ENCODE measurements at regions of chr17 and their contacts with region 1.

Region 1: DNA sequence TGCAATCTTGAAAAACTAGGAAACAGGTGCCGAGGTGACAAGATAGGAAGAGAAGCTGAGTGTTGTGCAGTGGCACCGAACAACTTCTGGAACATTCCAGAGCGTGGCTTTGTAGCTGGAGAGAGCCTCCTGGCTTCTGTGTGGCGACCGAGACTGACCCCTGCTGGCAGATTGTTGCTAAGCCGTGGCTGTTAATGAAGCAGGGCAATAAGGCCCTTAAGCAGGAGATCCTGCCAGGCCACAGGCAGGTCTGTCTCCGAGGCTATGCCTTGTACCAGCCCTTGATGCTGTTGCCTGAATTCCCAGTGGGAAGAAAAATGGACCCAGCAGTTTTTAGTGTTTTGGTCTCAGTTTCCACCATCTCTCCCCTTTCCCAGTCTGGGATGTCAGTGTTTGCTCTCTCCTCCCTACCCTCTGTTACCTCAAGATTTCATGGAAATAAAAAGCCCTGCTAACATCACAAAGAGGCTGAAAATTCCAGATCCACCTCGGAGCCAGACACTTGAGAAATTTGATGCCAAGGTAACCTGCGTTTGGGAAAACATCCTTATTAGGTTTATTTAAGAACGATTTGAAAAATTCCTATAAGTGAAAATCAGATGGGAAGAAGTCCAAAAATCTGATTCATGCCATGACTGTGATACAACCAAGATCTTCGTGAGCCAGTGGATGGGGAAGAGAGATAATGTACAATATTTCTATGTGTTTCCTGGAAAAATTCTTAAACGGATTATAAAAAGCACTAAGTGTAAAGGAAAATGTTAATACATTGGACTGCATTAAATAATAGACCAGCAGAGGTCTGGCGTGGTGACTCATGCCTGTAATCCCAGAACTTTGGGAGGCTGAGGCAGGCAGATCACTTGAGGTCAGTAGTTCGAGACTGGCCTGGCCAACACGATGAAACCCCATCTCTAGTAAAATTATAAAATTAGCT is 265.1 kb downstream of the PRKCA start:
- DNase-seq: peak; percentile 97
- H3K4me3 ChIP-seq: no peak overlapping the region
- H3K27ac ChIP-seq: peak overlapping the region; percentile 90
- H3K4me1 ChIP-seq: peaks cover 16% of the 10 kb centered on the region
- H3K27me3 ChIP-seq: no peaks in the 10 kb centered on the region
- CTCF ChIP-seq: peak; percentile 90 to 93
- POLR2A ChIP-seq: no peak

Region 2: DNA sequence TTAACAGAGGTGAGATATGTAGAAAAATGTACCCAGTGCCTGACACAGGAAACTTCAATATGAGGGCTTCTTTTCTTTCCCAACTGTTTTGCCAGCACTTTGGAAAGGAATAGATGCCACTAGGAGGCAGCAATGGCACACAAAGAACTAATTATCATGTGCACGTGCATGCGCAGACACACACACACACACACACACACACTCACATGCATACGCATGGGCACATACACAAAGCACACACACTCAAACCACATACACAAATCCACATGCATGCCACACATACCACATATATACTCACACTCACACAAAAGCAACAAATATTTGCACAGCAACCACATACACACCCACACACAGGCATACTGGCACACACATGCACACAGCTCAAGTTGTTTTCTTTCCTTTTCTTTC is 366.8 kb before region 1 on chr17:
- CTCF ChIA-PET with region 1: interaction called, 18 read pairs
- POLR2A ChIA-PET with region 1: no interaction called
- dilution Hi-C with region 1: no loop called
- intact Hi-C with region 1: loop called (anchors 1 kb)
- DNase-seq: peak; percentile 79
- H3K4me3 ChIP-seq: no peak overlapping the region
- H3K27ac ChIP-seq: no peak overlapping the region
- H3K4me1 ChIP-seq: no peaks in the 10 kb centered on the region
- H3K27me3 ChIP-seq: no peaks in the 10 kb centered on the region
- CTCF ChIP-seq: peak; percentile 67 to 70
- POLR2A ChIP-seq: no peak

Region 3: DNA sequence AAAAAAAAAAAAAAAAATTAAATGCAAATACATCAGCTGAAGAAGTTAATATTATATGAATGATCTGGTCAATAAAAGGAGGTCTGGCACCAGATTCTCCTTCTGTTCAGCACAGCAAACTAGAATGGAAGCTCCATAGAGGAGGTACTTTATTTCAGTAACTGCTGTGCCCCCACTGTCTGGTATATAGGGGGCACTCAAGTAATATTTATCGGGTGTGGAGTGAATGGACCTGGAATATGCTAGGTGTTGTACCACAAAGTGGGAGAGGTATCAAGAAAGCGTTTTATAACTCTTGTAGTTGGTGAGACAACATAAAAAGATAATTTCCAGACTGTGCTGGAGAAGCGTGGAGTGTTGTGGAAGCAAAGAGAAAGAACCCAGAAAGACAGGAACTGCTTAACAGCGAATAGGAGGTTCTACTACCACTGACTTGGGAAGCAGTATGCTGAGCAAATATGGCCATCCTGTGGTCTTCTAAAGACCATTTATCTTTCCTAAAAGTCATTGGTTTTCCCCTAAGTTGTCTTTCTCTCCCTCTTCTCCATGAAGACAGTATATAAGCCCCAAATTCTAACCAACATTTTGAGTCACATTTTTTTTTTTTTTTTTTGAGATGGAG is 277.3 kb before region 1 on chr17:
- CTCF ChIA-PET with region 1: interaction called, 6 read pairs
- POLR2A ChIA-PET with region 1: no interaction called
- dilution Hi-C with region 1: no loop called
- intact Hi-C with region 1: loop called (anchors 1 kb)
- DNase-seq: peak; percentile 15
- H3K4me3 ChIP-seq: no peak overlapping the region
- H3K27ac ChIP-seq: no peak overlapping the region
- H3K4me1 ChIP-seq: no peaks in the 10 kb centered on the region
- H3K27me3 ChIP-seq: no peaks in the 10 kb centered on the region
- CTCF ChIP-seq: no peak
- POLR2A ChIP-seq: no peak

Region 4: GRCh38 chr17:66331038-66331816 is 236.3 kb before region 1 on chr17:
- CTCF ChIA-PET with region 1: no interaction called
- POLR2A ChIA-PET with region 1: no interaction called
- dilution Hi-C with region 1: no loop called
- intact Hi-C with region 1: no loop called
- DNase-seq: no peak
- H3K4me3 ChIP-seq: no peak overlapping the region
- H3K27ac ChIP-seq: no peak overlapping the region
- H3K4me1 ChIP-seq: no peaks in the 10 kb centered on the region
- H3K27me3 ChIP-seq: no peaks in the 10 kb centered on the region
- CTCF ChIP-seq: no peak
- POLR2A ChIP-seq: no peak

Region 5: DNA sequence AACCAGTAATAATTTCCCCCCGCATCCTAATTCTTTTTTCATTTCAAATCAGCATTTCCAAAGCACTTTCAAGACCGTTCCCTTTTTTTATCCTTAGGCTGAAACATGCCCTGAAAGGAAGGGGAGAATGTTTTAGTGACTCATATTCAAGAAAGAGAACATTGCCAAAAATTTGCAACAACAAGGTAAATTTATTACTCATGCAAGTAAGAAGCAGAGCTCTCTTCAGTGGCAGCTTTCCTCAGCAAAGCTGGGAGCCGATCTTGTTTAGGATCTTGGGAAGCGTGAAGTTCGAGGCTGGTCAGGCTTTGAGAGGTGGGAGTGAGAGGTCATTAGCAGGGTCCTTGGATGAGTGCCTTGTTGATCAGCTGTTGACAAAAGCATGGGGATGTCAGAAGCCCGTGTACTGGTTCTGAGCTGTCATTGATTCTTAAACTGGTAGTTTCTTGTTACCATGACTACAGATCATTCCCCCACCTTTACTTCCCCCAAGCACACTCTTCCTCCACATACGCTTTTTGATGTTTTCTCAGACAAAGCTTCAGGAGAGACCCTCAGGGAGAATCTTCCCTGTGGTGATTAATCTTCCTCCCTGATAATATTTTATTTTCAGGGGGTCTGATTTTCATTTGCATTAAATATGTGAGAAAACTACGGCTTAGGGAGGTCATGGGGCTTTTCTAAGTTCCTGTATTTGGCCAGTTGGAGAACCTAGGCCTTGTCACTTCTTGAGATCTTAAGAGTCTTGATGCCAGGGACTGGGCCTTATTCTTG is 135.4 kb before region 1 on chr17:
- CTCF ChIA-PET with region 1: interaction called, 14 read pairs
- POLR2A ChIA-PET with region 1: no interaction called
- dilution Hi-C with region 1: no loop called
- intact Hi-C with region 1: loop called (anchors 1 kb)
- DNase-seq: peak; percentile 65
- H3K4me3 ChIP-seq: no peak overlapping the region
- H3K27ac ChIP-seq: peak overlapping the region; percentile 6
- H3K4me1 ChIP-seq: peaks cover 16% of the 10 kb centered on the region
- H3K27me3 ChIP-seq: no peaks in the 10 kb centered on the region
- CTCF ChIP-seq: no peak
- POLR2A ChIP-seq: no peak

Region 6: GRCh38 chr17:66508896-66509843 is 58.3 kb before region 1 on chr17:
- CTCF ChIA-PET with region 1: interaction called, 5 read pairs
- POLR2A ChIA-PET with region 1: no interaction called
- dilution Hi-C with region 1: no loop called
- intact Hi-C with region 1: loop called (anchors 1 kb)
- DNase-seq: peak; percentile 62
- H3K4me3 ChIP-seq: no peak overlapping the region
- H3K27ac ChIP-seq: peak overlapping the region; percentile 28
- H3K4me1 ChIP-seq: peaks cover 20% of the 10 kb centered on the region
- H3K27me3 ChIP-seq: no peaks in the 10 kb centered on the region
- CTCF ChIP-seq: no peak
- POLR2A ChIP-seq: no peak

Region 7: GRCh38 chr17:66625311-66625775 is 57.8 kb after region 1 on chr17:
- CTCF ChIA-PET with region 1: interaction called, 5 read pairs
- POLR2A ChIA-PET with region 1: no interaction called
- dilution Hi-C with region 1: no loop called
- intact Hi-C with region 1: loop called (anchors 1 kb)
- DNase-seq: peak; percentile 55
- H3K4me3 ChIP-seq: no peak overlapping the region
- H3K27ac ChIP-seq: no peak overlapping the region
- H3K4me1 ChIP-seq: no peaks in the 10 kb centered on the region
- H3K27me3 ChIP-seq: no peaks in the 10 kb centered on the region
- CTCF ChIP-seq: peak; percentile 23 to 39
- POLR2A ChIP-seq: no peak